ENCODE measurements at regions of chr1 and their contacts with region 1.

Region 1: DNA sequence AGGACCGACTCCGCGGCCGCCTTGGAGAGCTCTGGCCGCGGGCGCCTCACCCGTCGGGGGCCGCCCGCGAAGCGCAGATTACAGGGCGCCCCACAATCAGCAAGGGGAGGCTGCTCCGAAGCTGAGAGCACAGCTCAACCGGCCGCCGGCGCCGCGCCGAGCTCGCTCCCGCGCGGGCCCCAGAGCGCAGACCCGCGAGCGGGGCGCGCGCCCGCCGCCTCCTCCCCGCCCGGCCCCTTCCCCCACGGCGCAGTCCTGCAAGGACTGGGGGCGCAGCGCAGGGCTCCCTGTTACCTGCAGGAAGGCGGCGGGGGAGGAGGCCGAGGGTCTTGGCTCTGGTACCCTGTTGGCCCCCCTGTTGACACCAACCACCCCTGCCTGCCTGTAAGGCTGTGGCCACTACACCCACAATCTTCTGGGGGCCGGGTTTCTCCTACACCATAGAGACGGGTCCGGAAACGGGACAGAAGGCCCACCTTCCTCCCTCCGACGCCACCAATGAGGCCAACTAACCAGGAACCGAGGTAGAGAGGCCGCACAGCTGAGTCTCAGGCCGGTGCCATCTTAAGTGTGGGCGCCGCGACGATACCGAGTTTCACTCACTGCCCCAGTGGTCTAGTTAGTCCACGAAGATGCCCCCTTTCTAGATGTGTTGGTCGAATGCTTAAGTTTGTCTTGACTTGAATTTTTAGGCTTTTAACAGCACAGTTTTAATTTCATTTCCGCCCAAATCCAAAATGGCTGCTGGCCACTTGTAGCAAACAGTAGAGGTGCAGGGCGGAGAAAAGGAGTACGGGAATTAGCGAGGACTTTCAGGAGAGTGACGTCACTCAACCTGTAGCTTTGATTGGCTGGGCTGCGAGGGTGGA is at the start of gene SCYL3:
- DNase-seq: peak; percentile 92
- H3K4me3 Mint-ChIP-seq: peak within 1 kb of the TSS; percentile 82
- H3K27ac Mint-ChIP-seq: peak within 1 kb of the TSS; percentile 98
- H3K4me1 Mint-ChIP-seq: peaks cover 38% of the 10 kb centered on the region
- H3K27me3 Mint-ChIP-seq: no peaks in the 10 kb centered on the region
- total RNA-seq, gene SCYL3: 11.1 to 12.4 TPM

Region 2: DNA sequence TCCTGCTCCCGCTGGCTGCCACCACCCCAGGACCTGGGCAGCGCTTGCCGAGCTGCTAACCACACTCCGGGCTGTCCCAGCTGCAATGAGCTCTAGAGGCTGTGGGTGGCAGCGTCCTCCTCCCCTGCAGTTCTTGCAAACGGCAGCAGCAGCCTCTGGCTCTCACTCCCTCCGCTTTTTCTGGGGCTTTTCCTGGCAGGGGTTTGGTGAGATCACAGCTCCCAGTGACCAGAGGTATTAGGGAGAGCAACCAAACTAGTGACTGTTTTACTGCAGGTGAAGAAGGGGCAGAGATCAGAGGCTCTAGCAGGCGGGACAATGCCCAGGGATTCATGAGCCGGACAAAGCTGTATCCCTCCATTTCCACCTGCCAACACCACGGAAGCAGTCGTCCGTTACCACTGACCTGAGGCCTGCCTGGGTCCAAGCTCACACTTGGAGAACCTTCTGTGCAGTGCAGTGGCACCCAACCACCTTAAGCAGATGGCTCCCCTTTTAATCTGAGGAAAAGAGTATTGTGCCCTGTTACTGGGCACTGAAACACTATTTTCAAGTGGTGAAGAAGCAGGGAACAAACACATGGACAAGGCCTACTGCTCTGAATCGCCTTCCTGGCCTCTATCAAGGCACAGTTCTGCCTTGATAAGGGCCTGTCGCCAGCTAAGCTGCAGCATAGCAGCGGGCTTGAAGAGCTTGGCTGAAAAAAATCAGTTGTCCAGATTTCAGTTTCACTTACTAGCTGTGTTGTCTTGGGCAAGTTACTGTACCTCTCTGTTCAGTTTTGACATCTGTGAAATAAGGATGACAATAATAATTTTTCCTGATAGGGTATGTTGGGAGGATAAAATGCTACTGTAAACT is 307.1 kb before region 1 on chr1 and contains the start of gene F5:
- CTCF ChIA-PET with region 1: no interaction called
- POLR2A ChIA-PET with region 1: interaction called, 4 read pairs
- intact Hi-C with region 1: loop called (anchors 2 kb)
- DNase-seq: peak; percentile 90
- H3K4me3 Mint-ChIP-seq: peak within 1 kb of the TSS; percentile 96
- H3K27ac Mint-ChIP-seq: peak within 1 kb of the TSS; percentile 94
- H3K4me1 Mint-ChIP-seq: peaks cover 61% of the 10 kb centered on the region
- H3K27me3 Mint-ChIP-seq: no peaks in the 10 kb centered on the region
- total RNA-seq, gene F5: 50.8 to 51.1 TPM

Region 3: GRCh38 chr1:169906938-169907337 is 13.2 kb after region 1 on chr1:
- CTCF ChIA-PET with region 1: interaction called, 6 read pairs
- POLR2A ChIA-PET with region 1: interaction called, 8 read pairs
- intact Hi-C with region 1: loop called (anchors 1 kb)
- DNase-seq: no peak
- H3K4me3 Mint-ChIP-seq: no peak overlapping the region
- H3K27ac Mint-ChIP-seq: no peak overlapping the region
- H3K4me1 Mint-ChIP-seq: peaks cover 25% of the 10 kb centered on the region
- H3K27me3 Mint-ChIP-seq: no peaks in the 10 kb centered on the region

Region 4: GRCh38 chr1:169999331-169999741 is 105.6 kb after region 1 on chr1:
- CTCF ChIA-PET with region 1: no interaction called
- POLR2A ChIA-PET with region 1: no interaction called
- intact Hi-C with region 1: no loop called
- DNase-seq: no peak
- H3K4me3 Mint-ChIP-seq: no peak overlapping the region
- H3K27ac Mint-ChIP-seq: no peak overlapping the region
- H3K4me1 Mint-ChIP-seq: no peaks in the 10 kb centered on the region
- H3K27me3 Mint-ChIP-seq: no peaks in the 10 kb centered on the region

Region 5: GRCh38 chr1:170027760-170028159 is 134.0 kb after region 1 on chr1:
- CTCF ChIA-PET with region 1: no interaction called
- POLR2A ChIA-PET with region 1: no interaction called
- intact Hi-C with region 1: no loop called
- DNase-seq: no peak
- H3K4me3 Mint-ChIP-seq: no peak overlapping the region
- H3K27ac Mint-ChIP-seq: no peak overlapping the region
- H3K4me1 Mint-ChIP-seq: no peaks in the 10 kb centered on the region
- H3K27me3 Mint-ChIP-seq: no peaks in the 10 kb centered on the region

Region 6: GRCh38 chr1:170531758-170532657 is 638.3 kb after region 1 on chr1 and contains the start of gene GORAB:
- CTCF ChIA-PET with region 1: no interaction called
- POLR2A ChIA-PET with region 1: interaction called, 3 read pairs
- intact Hi-C with region 1: loop called (anchors 2 kb)
- DNase-seq: peak; percentile 93
- H3K4me3 Mint-ChIP-seq: no peak within 1 kb of the TSS
- H3K27ac Mint-ChIP-seq: no peak within 1 kb of the TSS
- H3K4me1 Mint-ChIP-seq: peaks cover 15% of the 10 kb centered on the region
- H3K27me3 Mint-ChIP-seq: no peaks in the 10 kb centered on the region
- total RNA-seq, gene GORAB: 8.5 to 9.0 TPM

Measured in activated CD4-positive, alpha-beta memory T cell treated with anti-CD3 and anti-CD28 coated beads for 36 hours (primary cell).